ENCODE measurements at regions of chr4 and their contacts with region 1.

Region 1: GRCh38 chr4:55445921-55446577 is 50.3 kb downstream of the TMEM165 start:
- DNase-seq: no peak
- ATAC-seq: no peak
- H3K4me3 Mint-ChIP-seq: no peak overlapping the region
- H3K27ac Mint-ChIP-seq: no peak overlapping the region
- H3K4me1 Mint-ChIP-seq: peaks cover 8% of the 10 kb centered on the region
- H3K27me3 Mint-ChIP-seq: no peaks in the 10 kb centered on the region

Region 2: DNA sequence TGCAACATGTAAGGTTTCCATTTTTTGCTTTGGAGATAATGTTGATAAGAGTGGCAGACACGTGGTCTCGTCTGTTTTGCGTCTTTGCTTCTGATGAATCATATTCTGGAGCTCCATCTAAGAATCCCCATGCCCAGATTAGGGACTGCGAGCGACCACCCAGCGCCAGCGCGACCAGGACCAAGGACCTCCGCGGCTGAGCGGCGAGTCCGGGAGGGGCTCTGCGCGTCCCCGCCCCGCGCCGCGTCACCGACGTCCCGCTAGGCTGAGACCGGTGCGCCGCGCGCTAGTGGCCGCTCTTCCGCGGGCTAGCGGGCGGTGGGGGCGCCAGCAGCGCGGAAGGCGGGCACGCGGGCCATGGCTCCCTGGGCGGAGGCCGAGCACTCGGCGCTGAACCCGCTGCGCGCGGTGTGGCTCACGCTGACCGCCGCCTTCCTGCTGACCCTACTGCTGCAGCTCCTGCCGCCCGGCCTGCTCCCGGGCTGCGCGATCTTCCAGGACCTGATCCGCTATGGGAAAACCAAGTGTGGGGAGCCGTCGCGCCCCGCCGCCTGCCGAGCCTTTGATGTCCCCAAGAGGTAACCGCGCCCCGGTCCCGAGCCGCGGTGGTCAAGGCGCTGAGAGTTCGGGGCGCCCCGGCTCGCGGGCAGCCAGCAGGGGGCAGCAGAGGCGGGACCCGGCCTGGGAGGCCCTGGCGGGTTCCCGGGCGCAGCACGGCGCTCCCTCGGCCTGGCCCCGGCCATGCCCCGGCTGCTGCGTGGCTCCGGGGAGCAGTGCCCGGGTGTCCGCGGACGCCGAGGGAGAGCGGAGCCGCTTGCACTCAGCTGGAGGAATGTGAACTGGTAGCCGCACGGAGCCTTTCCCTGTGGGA is 99.8 kb before region 1 on chr4 and contains the start of gene SRD5A3:
- POLR2A ChIA-PET with region 1: no interaction called
- DNase-seq: peak; percentile 93
- ATAC-seq: peak; percentile 94
- H3K4me3 Mint-ChIP-seq: peak within 1 kb of the TSS; percentile 86
- H3K27ac Mint-ChIP-seq: peak within 1 kb of the TSS; percentile 82
- H3K4me1 Mint-ChIP-seq: peaks cover 21% of the 10 kb centered on the region
- H3K27me3 Mint-ChIP-seq: no peaks in the 10 kb centered on the region
- total RNA-seq, gene SRD5A3: 5.9 to 6.0 TPM

Region 3: GRCh38 chr4:55424791-55425190 is 21.3 kb before region 1 on chr4:
- POLR2A ChIA-PET with region 1: interaction called, 11 read pairs
- DNase-seq: no peak
- ATAC-seq: no peak
- H3K4me3 Mint-ChIP-seq: no peak overlapping the region
- H3K27ac Mint-ChIP-seq: no peak overlapping the region
- H3K4me1 Mint-ChIP-seq: peaks cover 5% of the 10 kb centered on the region
- H3K27me3 Mint-ChIP-seq: no peaks in the 10 kb centered on the region

Measured in activated naive CD8-positive, alpha-beta T cell treated with anti-CD3 and anti-CD28 coated beads, Interleukin-2, amount 10 ng/mL, durations not matched to agents 7 days and 5 days (primary cell).